PC-9 (cell line): ENCODE measurements at regions of chr17 and their contacts with region 1.

Region 1: GRCh38 chr17:9644910-9645751 is at the start of gene USP43:
- DNase-seq: peak; percentile 59 to 90
- H3K4me3 ChIP-seq: peak within 1 kb of the TSS; percentile 94
- H3K27ac ChIP-seq: peak within 1 kb of the TSS; percentile 92
- H3K4me1 ChIP-seq: peaks cover 25% of the 10 kb centered on the region
- H3K27me3 ChIP-seq: no peaks in the 10 kb centered on the region
- CTCF ChIP-seq: peak; percentile 32; the same call in 1 of the 2 replicates
- total RNA-seq, gene USP43: 16.0 and 19.2 TPM in 2 replicates

Region 2: DNA sequence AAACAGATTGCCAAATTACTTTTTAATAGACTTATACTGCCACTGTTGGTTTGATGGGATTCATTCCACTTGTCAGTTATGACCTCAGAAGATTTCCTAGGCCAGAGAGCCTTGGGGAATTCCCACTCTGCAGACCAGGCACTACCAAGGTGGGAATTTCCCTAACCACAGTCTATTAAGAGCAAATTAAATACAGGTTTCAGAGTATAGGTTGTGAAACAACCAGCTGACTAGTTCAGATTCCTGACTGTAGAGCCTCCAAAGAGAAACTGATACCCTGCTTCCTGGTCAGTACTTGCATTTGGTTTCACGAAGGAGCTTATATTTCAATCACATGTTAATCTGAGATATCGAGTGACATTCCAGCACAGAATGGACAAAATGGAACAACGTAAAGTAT is 256.0 kb before region 1 on chr17:
- CTCF ChIA-PET with region 1: no interaction called
- POLR2A ChIA-PET with region 1: no interaction called
- intact Hi-C with region 1: no loop called
- DNase-seq: peak; percentile 39 to 89
- H3K4me3 ChIP-seq: no peak overlapping the region
- H3K27ac ChIP-seq: peak overlapping the region; percentile 46
- H3K4me1 ChIP-seq: peaks cover 7% of the 10 kb centered on the region; the same call in 1 of the 2 replicates
- H3K27me3 ChIP-seq: no peaks in the 10 kb centered on the region
- CTCF ChIP-seq: no peak

Region 3: DNA sequence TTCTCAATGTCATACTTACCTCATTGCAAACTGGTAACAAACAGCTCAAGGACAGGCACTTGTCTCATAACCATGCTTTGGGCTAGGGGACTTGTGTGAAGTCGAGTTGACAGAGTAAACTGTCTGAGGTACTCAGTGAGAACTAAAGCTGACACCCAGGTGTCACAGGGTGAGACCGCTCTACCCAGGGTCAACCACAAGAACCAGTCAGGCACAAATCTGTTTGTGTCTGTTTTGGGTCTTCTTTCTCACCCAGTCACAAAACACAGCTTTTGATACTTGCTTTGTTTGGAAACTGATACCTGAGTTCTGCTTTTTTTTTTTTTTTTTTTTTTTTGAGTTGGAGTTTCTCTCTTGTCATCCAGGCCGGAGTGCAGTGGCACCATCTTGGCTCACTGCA is 230.7 kb before region 1 on chr17:
- CTCF ChIA-PET with region 1: no interaction called
- POLR2A ChIA-PET with region 1: no interaction called
- intact Hi-C with region 1: no loop called
- DNase-seq: no peak
- H3K4me3 ChIP-seq: no peak overlapping the region
- H3K27ac ChIP-seq: no peak overlapping the region
- H3K4me1 ChIP-seq: no peaks in the 10 kb centered on the region
- H3K27me3 ChIP-seq: no peaks in the 10 kb centered on the region
- CTCF ChIP-seq: no peak

Region 4: GRCh38 chr17:9575381-9576101 is 69.6 kb before region 1 on chr17 and contains the start of gene STX8:
- CTCF ChIA-PET with region 1: interaction called, 5 read pairs
- POLR2A ChIA-PET with region 1: interaction called, 16 read pairs
- intact Hi-C with region 1: loop called (anchors 2 kb)
- DNase-seq: peak; percentile 57 to 88
- H3K4me3 ChIP-seq: peak within 1 kb of the TSS; percentile 82
- H3K27ac ChIP-seq: no peak within 1 kb of the TSS
- H3K4me1 ChIP-seq: no peaks in the 10 kb centered on the region
- H3K27me3 ChIP-seq: no peaks in the 10 kb centered on the region
- CTCF ChIP-seq: no peak
- total RNA-seq, gene STX8: 49.2 and 60.6 TPM in 2 replicates

Region 5: GRCh38 chr17:9676742-9677387 is 31.7 kb after region 1 on chr17:
- CTCF ChIA-PET with region 1: no interaction called
- POLR2A ChIA-PET with region 1: interaction called, 4 read pairs
- intact Hi-C with region 1: loop called (anchors 1 kb)
- DNase-seq: peak; percentile 83 to 91
- H3K4me3 ChIP-seq: no peak overlapping the region
- H3K27ac ChIP-seq: peak overlapping the region; percentile 83
- H3K4me1 ChIP-seq: peaks cover 25% of the 10 kb centered on the region
- H3K27me3 ChIP-seq: no peaks in the 10 kb centered on the region
- CTCF ChIP-seq: no peak

Region 6: DNA sequence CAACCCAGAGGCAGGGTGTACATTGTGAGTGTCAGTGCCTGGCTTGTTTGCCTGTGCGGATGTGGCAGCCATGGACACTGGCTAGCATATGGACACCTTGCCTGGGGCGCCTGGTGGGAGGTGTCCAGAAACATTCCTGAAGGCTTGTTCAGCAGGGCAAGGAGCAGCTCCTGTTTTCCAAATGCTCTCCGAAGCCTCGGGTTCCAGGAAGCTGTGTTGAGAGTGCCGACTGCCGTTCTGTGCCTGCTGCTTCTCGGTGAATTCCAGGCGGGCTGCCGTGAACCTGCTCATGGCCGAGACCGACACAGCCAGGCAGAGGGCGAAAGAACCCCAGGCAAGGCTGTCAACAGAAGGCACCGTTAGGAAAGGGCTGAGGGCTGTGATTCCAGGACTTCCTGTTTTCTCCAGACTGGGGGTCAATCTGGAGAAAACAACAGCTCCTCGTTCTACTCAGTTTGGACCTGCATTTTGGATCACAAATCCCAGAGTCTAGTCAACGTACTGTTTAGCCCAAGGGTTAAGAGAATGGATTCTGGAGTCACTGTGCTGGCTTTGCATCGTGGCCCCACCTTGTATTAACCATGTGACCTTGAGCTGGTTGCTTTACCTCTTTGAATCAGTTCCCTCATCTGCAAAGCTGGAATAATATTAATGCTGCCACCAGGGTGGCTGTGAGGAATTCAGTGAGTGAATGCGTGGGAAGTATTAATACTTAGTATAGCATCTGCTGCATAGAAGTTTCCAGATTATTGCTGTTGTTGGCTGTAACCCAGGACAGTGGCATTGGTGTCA is 157.4 kb after region 1 on chr17:
- CTCF ChIA-PET with region 1: no interaction called
- POLR2A ChIA-PET with region 1: no interaction called
- intact Hi-C with region 1: loop called (anchors 2 kb)
- DNase-seq: peak; percentile 92 to 96
- H3K4me3 ChIP-seq: peak overlapping the region; percentile 46; the same call in 1 of the 2 replicates
- H3K27ac ChIP-seq: peak overlapping the region; percentile 97
- H3K4me1 ChIP-seq: peaks cover 24% of the 10 kb centered on the region
- H3K27me3 ChIP-seq: no peaks in the 10 kb centered on the region
- CTCF ChIP-seq: no peak